H1 (cell line): ENCODE measurements at regions of chr15 and their contacts with region 1.

Region 1: DNA sequence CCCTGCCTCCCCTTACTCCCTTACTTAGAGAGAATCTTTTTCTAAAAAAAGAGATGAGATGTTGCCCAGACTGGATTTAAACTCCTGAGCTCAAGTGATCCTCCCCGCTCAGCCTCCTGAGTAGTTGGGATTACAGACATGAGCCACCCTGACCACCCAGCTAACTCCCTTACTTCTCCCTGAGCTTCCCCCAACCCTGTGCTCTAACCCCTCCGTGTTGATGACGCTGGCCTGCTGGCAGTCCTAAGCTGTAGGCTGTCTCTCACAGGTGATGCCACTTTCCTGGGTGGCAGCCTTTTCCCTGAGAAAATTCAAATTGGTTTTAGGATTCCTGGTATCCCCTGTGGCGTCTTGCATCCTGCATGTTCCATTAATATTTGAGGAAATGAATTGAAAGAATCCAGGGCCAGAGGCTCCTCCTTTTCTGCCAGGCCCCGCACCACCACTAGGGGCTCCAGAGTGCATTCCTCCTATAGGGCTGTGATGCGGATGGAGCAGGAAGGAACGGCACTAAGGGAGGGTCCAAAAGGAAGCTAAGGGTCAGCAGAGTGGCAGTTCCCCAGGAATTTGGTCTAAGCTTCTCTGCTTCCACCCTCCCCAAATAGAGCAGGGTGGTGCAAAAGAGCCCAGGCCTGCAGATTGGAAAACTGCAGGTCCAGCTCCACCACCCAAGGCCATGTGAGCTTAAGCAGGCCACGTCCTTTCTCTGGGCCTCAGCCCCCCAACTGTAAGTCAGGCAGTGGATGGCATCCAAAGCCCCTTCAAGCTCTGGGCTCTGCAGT is 101.1 kb downstream of the DAPK2 start:
- DNase-seq: peak in 1 of 2 experiments; percentile 91
- H3K4me3 ChIP-seq: no peak overlapping the region
- H3K27ac ChIP-seq: no peak overlapping the region
- H3K4me1 ChIP-seq: peaks cover 0 to 3% (median 2%) of the 10 kb centered on the region in 4 experiments; a peak in 5 of 7 replicates
- H3K27me3 ChIP-seq: no peaks in the 10 kb centered on the region
- CTCF ChIP-seq: peak; percentile 85 to 91 (median 89)
- EP300 ChIP-seq: no peak
- POLR2A ChIP-seq: no peak
- RAD21 ChIP-seq: peak; percentile 62 to 79

Region 2: GRCh38 chr15:63860155-63860554 is 85.0 kb before region 1 on chr15:
- CTCF ChIA-PET with region 1: no interaction called
- POLR2A ChIA-PET with region 1: no interaction called
- DNase-seq: no peak
- H3K4me3 ChIP-seq: no peak overlapping the region
- H3K27ac ChIP-seq: no peak overlapping the region
- H3K4me1 ChIP-seq: no peaks in the 10 kb centered on the region
- H3K27me3 ChIP-seq: no peaks in the 10 kb centered on the region
- CTCF ChIP-seq: no peak
- EP300 ChIP-seq: no peak
- POLR2A ChIP-seq: no peak
- RAD21 ChIP-seq: no peak

Region 3: DNA sequence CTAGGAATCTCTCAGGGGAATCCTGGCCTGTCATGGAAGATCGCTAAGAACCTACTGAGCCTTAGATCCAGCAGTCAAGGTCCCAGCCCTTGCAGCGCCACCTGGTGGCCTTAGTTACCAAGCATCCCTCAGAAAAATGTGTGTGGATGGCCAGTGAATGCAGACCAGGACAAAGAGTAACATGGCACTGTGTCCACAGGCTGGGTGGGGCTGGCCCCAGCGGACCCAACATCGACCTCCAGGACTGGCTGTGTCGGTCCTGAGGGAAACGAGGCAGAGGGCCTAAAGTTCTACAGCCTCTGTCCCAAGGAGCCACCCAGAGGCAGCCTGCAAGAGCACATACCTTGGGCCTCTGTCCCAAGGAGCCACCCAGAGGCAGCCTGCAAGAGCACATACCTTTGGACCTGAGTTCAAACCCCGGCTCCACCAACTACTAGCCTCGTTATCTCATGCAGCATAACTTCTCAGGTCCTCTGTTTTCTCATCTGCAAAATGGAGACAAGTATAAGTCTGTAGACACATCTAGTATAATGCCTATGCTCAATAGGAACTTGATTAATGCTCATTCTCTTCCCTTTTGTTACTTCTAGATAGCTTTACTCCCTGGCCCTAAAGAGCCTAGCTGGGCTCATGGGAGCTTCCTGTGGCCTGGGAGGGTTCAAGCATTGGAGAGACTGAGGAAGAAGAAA is 54.0 kb before region 1 on chr15:
- CTCF ChIA-PET with region 1: interaction called, 13 read pairs
- POLR2A ChIA-PET with region 1: no interaction called
- DNase-seq: peak; percentile 80 to 94
- H3K4me3 ChIP-seq: no peak overlapping the region
- H3K27ac ChIP-seq: no peak overlapping the region
- H3K4me1 ChIP-seq: peaks cover 0 to 3% (median 0%) of the 10 kb centered on the region in 4 experiments; a peak in 1 of 7 replicates
- H3K27me3 ChIP-seq: no peaks in the 10 kb centered on the region
- CTCF ChIP-seq: peak; percentile 88 to 91 (median 90)
- EP300 ChIP-seq: no peak
- POLR2A ChIP-seq: no peak
- RAD21 ChIP-seq: peak; percentile 86 to 90

Region 4: DNA sequence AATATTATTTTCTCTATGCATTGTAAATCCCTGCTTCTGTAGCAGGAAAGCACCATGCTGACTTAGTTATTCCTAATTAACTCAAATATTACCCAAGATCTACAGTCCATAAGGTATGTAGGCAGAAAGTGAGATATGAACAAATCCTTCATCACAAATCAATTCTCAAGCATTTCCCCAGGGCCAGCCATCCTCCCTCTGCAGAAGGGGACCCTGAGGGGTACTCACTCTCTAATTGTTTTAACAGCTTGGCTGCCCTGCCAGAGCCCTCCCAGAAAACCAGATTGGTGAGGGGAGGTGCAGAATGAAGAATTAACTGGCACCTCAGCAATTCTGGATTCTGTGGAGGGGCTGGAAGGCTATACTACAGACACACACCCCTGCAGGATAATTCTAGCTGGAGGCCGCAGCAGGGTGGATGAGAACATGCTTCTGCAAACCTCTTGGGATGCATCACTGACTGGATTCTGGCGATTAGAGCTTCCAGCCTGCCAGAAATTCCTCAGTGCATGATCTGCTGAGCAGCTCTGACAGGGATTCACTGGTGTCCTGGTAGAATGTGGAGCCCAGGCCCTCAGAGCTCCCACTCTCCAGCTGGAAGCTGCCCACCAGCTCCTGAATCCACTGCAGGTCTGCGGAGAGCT is 22.8 kb before region 1 on chr15:
- CTCF ChIA-PET with region 1: interaction called, 72 read pairs
- POLR2A ChIA-PET with region 1: no interaction called
- DNase-seq: no peak
- H3K4me3 ChIP-seq: no peak overlapping the region
- H3K27ac ChIP-seq: no peak overlapping the region
- H3K4me1 ChIP-seq: peaks cover 0 to 8% (median 2%) of the 10 kb centered on the region in 4 experiments; a peak in 3 of 7 replicates
- H3K27me3 ChIP-seq: no peaks in the 10 kb centered on the region
- CTCF ChIP-seq: no peak
- EP300 ChIP-seq: no peak
- POLR2A ChIP-seq: no peak
- RAD21 ChIP-seq: no peak

Region 5: DNA sequence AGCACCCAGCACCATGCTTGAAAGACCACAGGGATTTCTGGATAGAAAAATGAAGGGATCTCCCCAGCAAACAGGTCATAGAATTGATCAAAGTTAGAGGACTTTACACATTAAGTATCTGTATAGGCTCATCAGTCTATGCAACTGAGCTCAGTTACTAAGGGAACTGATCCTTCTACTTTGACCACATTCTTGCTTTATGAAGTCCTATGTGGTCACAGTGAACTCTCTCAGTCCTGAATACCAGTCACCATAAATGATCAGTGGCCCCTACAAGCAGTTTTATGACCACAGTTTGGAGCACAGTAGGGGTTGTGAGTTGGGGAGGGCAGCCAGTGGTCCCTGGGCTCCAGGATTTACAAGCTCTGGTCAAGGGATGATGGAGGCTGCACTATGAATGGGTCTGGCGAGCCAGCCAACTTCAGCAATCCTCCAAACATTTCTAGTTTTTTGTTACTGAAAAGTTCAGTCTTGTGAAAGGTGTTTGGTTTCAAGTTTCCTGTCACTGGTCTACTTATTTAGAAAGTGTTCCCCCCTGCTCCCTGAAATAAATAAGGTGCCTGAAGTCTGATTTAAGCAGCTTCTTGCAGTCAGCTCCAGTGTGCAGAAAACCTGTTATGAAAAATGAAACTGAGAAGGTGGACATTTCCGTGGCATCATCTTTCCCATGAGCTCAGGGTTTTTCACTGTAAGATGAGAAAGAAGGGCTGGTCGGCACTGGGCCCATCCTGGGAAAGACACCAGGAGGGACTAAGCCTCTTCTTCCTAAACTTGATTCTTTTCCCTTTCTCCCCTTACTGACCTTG is 25.6 kb after region 1 on chr15:
- CTCF ChIA-PET with region 1: interaction called, 56 read pairs
- POLR2A ChIA-PET with region 1: no interaction called
- DNase-seq: peak in 1 of 2 experiments; percentile 23
- H3K4me3 ChIP-seq: no peak overlapping the region
- H3K27ac ChIP-seq: no peak overlapping the region
- H3K4me1 ChIP-seq: peaks cover 7 to 28% (median 20%) of the 10 kb centered on the region in 4 experiments
- H3K27me3 ChIP-seq: peaks cover 0 to 2% (median 0%) of the 10 kb centered on the region in 4 experiments; a peak in 1 of 7 replicates
- CTCF ChIP-seq: no peak
- EP300 ChIP-seq: no peak
- POLR2A ChIP-seq: no peak
- RAD21 ChIP-seq: no peak

Region 6: DNA sequence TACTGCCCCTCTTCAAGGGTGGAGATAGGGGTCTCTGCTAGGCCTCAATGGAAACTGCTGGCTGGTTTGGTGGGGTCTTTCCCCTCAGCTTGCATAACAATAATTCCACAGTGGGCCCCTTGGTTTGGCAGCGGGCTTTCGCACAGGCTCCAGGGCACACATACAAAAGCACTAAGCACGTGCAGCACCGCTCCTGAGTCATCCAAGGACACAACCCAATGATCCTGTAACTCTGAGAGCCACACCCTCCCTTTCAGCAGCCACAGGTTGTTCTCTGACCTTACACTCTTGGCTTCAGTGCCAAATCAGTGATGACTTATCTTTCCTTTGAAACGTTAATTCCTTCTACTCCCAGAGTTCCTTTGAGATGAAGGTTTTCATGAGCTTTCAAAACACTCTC is 59.4 kb after region 1 on chr15:
- CTCF ChIA-PET with region 1: interaction called, 18 read pairs
- POLR2A ChIA-PET with region 1: no interaction called
- DNase-seq: no peak
- H3K4me3 ChIP-seq: no peak overlapping the region
- H3K27ac ChIP-seq: no peak overlapping the region
- H3K4me1 ChIP-seq: peaks cover 0 to 2% (median under 1%) of the 10 kb centered on the region in 4 experiments; a peak in 2 of 7 replicates
- H3K27me3 ChIP-seq: no peaks in the 10 kb centered on the region
- CTCF ChIP-seq: no peak
- EP300 ChIP-seq: no peak
- POLR2A ChIP-seq: no peak
- RAD21 ChIP-seq: no peak

Region 7: GRCh38 chr15:64046347-64047153 is 101.4 kb after region 1 on chr15 and contains the start of gene DAPK2:
- CTCF ChIA-PET with region 1: interaction called, 82 read pairs
- POLR2A ChIA-PET with region 1: no interaction called
- DNase-seq: peak in 1 of 2 experiments; percentile 86
- H3K4me3 ChIP-seq: peak within 1 kb of the TSS; percentile 41 to 70 (median 48)
- H3K27ac ChIP-seq: no peak within 1 kb of the TSS
- H3K4me1 ChIP-seq: peaks cover 0 to 15% (median 5%) of the 10 kb centered on the region in 4 experiments; a peak in 4 of 7 replicates
- H3K27me3 ChIP-seq: peaks cover 3 to 31% (median 19%) of the 10 kb centered on the region in 4 experiments; a peak in 6 of 7 replicates
- CTCF ChIP-seq: peak; percentile 53 to 78 (median 58)
- EP300 ChIP-seq: no peak
- POLR2A ChIP-seq: no peak
- RAD21 ChIP-seq: peak; percentile 46 to 75
- total RNA-seq, gene DAPK2: 2.2 and 2.9 TPM in 2 replicates

Region 8: DNA sequence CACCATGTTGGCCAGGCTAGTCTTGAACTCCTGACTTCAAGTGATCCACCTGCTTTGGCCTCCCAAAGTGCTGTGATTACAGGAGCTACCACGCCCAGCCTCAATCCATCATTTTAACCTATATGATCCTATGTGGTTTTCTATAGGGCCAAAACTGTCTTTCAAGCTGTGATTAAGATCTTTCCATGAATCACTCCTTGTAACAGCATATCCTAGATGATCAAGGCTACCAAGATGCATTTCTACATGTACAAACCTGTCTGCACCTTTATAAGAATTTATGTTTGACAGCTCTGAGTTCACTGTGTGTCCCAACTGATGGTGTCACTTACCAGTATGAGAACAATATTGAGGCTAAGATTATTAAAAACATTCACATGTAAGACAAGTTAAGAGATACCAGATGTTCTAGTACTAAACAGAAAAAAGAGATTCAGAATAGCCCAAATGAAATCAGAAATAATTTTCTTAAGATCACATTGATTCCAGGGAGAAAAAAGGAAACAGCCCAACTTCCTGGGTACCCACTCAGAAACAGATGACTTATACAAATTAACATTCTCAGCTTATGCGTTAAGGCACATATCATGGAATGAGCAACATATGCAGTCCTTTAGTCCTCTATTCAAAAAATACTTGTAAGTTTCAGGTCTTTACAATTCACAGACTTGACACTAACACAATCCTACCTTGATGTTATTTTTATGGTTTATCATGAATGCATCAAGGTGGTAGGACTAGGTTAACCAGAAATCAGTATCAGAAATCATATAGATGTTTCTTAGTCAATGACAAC is 242.4 kb after region 1 on chr15:
- CTCF ChIA-PET with region 1: no interaction called
- POLR2A ChIA-PET with region 1: no interaction called
- DNase-seq: no peak
- H3K4me3 ChIP-seq: no peak overlapping the region
- H3K27ac ChIP-seq: no peak overlapping the region
- H3K4me1 ChIP-seq: no peaks in the 10 kb centered on the region
- H3K27me3 ChIP-seq: no peaks in the 10 kb centered on the region
- CTCF ChIP-seq: no peak
- EP300 ChIP-seq: no peak
- POLR2A ChIP-seq: no peak
- RAD21 ChIP-seq: no peak